Thyroid gland (tissue), 4 donors: ENCODE measurements at regions of chr11 and their contacts with region 1.

Region 1: DNA sequence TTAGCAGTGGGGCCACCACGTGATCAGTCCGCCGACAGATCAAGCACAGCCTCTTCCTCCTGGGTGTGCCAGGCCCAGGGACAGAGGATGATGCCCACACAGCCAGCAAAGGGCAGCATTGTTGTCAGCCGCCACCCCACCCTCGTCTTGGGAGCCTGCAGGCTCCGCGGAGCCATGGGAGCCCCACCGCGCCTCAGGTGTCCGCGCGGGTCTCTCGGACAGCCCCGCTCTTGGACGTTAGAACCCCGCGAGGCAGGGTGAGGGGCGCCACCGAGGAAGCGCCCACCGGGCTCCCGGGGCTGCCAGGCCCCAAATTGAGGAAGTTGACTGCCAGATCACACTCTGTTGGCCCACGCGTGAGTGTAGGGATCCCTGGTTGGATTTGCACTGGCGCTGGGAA is 83.9 kb upstream of the MS4A8 start:
- DNase-seq: no peak
- H3K4me3 ChIP-seq: no peak overlapping the region
- H3K27ac ChIP-seq: no peak overlapping the region
- H3K4me1 ChIP-seq: no peaks in the 10 kb centered on the region
- H3K27me3 ChIP-seq: no peaks in the 10 kb centered on the region
- CTCF ChIP-seq: no peak
- POLR2A ChIP-seq: no peak

Region 2: GRCh38 chr11:60363542-60364510 is 251.7 kb before region 1 on chr11:
- intact Hi-C with region 1: loop called (anchors 5 kb)
- DNase-seq: peak; percentile 34 to 54
- H3K4me3 ChIP-seq: no peak overlapping the region
- H3K27ac ChIP-seq: no peak overlapping the region
- H3K4me1 ChIP-seq: no peaks in the 10 kb centered on the region
- H3K27me3 ChIP-seq: no peaks in the 10 kb centered on the region
- CTCF ChIP-seq: peak; percentile 30 to 75 (median 44)
- POLR2A ChIP-seq: no peak

Region 3: GRCh38 chr11:60680455-60681119 is 65.1 kb after region 1 on chr11:
- intact Hi-C with region 1: no loop called
- DNase-seq: no peak
- H3K4me3 ChIP-seq: no peak overlapping the region
- H3K27ac ChIP-seq: no peak overlapping the region
- H3K4me1 ChIP-seq: no peaks in the 10 kb centered on the region
- H3K27me3 ChIP-seq: no peaks in the 10 kb centered on the region
- CTCF ChIP-seq: no peak
- POLR2A ChIP-seq: no peak